CD14-positive monocyte (primary cell): ENCODE measurements at regions of chr20 and their contacts with region 1.

Region 1: DNA sequence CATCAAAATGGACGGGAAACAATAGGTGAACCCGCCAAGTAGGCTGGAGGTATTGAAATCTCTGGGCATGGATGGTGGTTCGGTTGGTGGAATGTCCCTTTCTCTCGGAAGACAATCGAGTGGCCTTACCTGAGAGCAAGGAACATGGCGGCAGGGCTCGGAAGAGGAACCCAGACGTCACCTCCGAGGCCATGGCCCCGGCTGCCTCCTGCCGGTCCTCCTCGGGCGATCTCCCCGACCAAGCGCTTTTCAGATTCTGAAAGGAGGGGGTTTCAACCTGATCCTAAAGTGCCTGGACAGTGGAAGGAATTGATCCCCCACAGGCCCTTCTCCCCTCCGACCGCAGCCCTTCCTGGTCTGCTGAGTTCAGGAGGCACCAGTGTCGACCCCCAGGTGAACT is 47.2 kb downstream of the GNAS-AS1 start:
- DNase-seq: no peak
- H3K4me3 ChIP-seq: no peak overlapping the region
- H3K4me3 Mint-ChIP-seq: no peak overlapping the region
- H3K27ac ChIP-seq: no peak overlapping the region
- H3K27ac Mint-ChIP-seq: no peak overlapping the region
- H3K4me1 ChIP-seq: no peaks in the 10 kb centered on the region
- H3K4me1 Mint-ChIP-seq: no peaks in the 10 kb centered on the region
- H3K27me3 ChIP-seq: peaks cover 0 to 8% of the 10 kb centered on the region in 2 donors
- H3K27me3 Mint-ChIP-seq: peaks cover 19 to 35% (median 22%) of the 10 kb centered on the region in 3 donors
- CTCF ChIP-seq: no peak

Region 2: GRCh38 chr20:58753267-58753921 is 50.1 kb before region 1 on chr20:
- intact Hi-C with region 1: no loop called
- DNase-seq: no peak
- H3K4me3 ChIP-seq: no peak overlapping the region
- H3K4me3 Mint-ChIP-seq: peak overlapping the region in 1 of 2 donors; percentile 22
- H3K27ac ChIP-seq: no peak overlapping the region
- H3K27ac Mint-ChIP-seq: no peak overlapping the region
- H3K4me1 ChIP-seq: no peaks in the 10 kb centered on the region
- H3K4me1 Mint-ChIP-seq: no peaks in the 10 kb centered on the region
- H3K27me3 ChIP-seq: peaks cover 0 to 2% of the 10 kb centered on the region in 2 donors
- H3K27me3 Mint-ChIP-seq: peaks cover 4 to 22% (median 11%) of the 10 kb centered on the region in 3 donors
- CTCF ChIP-seq: no peak

Region 3: DNA sequence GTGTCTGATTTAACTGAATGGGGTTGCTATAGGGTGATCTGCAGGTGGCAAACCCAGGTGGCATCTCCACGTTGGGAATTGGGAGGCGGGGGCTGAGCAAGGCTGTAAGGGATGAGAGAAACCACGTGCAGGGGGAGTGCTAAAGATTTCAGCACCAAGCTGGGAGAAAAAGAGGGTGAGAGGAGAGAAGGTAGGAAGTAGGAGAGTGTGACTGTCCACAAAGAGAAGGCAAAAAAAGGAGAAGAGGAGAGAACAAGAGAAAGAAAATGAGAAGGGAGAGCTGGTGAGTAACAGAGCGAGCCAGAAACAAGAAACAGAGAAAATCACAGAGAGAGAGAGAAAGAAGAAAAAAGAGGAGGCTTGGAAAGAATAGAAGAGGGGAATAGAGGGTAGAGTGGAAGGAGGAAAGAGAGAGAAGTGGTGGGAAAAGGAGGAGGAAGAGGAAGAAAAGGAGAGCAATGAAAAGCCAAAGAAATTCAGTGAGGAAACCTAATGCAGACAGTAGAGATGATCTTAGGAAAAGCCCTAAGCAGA is 32.6 kb before region 1 on chr20:
- intact Hi-C with region 1: loop called in 1 of 2 experiments (anchors 2 kb)
- DNase-seq: no peak
- H3K4me3 ChIP-seq: no peak overlapping the region
- H3K4me3 Mint-ChIP-seq: peak overlapping the region in 1 of 2 donors; percentile 8
- H3K27ac ChIP-seq: no peak overlapping the region
- H3K27ac Mint-ChIP-seq: no peak overlapping the region
- H3K4me1 ChIP-seq: no peaks in the 10 kb centered on the region
- H3K4me1 Mint-ChIP-seq: no peaks in the 10 kb centered on the region
- H3K27me3 ChIP-seq: peaks cover 0 to 6% of the 10 kb centered on the region in 2 donors
- H3K27me3 Mint-ChIP-seq: peaks cover 9 to 20% (median 19%) of the 10 kb centered on the region in 3 donors
- CTCF ChIP-seq: no peak

Region 4: DNA sequence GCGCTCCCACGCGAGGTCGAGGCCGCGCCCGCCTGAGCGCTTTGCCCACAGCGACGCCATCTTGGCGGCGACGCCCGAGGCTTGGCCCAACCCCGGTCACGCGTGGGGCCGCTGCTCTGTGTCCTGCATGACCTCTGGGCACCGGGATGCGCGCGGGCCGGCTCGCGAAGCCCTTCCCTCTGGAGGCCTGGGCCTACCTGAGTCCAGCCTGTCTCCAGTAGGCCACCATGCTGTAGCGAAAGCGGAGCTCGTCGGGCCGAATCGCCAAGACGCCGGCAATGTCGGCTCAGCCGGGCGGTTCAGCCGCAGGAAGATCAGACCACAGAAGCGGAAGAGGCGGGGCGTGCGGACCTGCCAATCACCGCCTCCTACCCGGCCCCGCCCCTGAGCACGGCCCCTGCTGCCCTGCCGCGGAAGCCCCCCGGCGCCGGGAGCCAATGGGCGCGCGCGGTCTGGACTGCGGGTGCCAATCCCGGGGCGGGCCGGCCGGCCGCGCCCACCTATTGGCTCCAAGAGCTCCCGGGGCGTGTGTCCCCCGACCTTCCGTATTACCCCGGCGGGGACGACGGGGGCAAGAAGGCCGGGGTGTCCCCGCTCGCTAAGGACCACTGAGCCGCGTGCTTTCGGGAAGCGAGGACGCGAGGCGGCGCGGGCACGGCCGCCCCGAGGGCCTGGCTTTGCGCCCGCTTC is 228.6 kb after region 1 on chr20 and contains the start of gene ATP5F1E:
- intact Hi-C with region 1: no loop called
- DNase-seq: peak; percentile 94 to 95 (median 94)
- H3K4me3 ChIP-seq: peak within 1 kb of the TSS; percentile 53 to 83 (median 79)
- H3K4me3 Mint-ChIP-seq: peak within 1 kb of the TSS; percentile 94 to 97
- H3K27ac ChIP-seq: peak within 1 kb of the TSS; percentile 78 to 88
- H3K27ac Mint-ChIP-seq: peak within 1 kb of the TSS; percentile 94 to 99 (median 97)
- H3K4me1 ChIP-seq: peaks cover 23 to 41% of the 10 kb centered on the region in 2 donors
- H3K4me1 Mint-ChIP-seq: peaks cover 44% of the 10 kb centered on the region
- H3K27me3 ChIP-seq: no peaks in the 10 kb centered on the region
- H3K27me3 Mint-ChIP-seq: peaks cover 0 to 2% (median 0%) of the 10 kb centered on the region in 3 donors
- CTCF ChIP-seq: no peak
- polyA plus RNA-seq, gene ATP5F1E: 39.0 to 105 (median 102) TPM